ENCODE measurements at regions of chr11 and their contacts with region 1.

Region 1: DNA sequence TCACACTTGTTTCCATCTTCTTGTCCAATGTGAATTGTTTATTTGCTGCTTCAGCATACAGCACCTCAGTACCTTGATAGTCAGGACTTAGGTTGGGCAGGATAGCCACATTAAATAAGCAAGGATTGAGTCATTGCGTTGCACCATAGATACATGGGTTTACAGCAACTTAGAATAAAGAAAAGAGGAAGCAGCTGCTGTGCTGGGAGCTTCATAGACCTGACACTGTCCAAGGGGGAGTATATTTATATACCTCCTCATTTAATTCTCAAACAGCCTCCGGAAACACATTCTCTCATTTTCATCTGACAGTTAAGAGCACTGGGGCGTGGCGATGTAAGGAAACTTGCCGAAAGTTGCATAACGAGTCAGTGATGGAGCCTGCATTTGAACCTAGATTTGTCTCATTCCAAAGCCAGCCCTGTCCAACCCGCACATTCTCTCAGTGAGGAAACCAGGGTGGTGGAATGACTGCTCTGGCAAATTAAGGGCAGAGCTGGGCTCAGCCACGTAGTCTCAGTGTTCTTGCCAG is 42.2 kb downstream of the UBASH3B start:
- DNase-seq: peak; percentile 71
- ATAC-seq: peak; percentile 77
- H3K4me3 Mint-ChIP-seq: peak overlapping the region; percentile 46
- H3K27ac Mint-ChIP-seq: peak overlapping the region; percentile 82
- H3K4me1 Mint-ChIP-seq: peaks cover 87% of the 10 kb centered on the region
- H3K27me3 Mint-ChIP-seq: no peaks in the 10 kb centered on the region
- CTCF ChIP-seq: no peak

Region 2: GRCh38 chr11:122383186-122383585 is 314.5 kb before region 1 on chr11:
- CTCF ChIA-PET with region 1: no interaction called
- POLR2A ChIA-PET with region 1: no interaction called
- intact Hi-C with region 1: no loop called
- DNase-seq: no peak
- ATAC-seq: no peak
- H3K4me3 Mint-ChIP-seq: no peak overlapping the region
- H3K27ac Mint-ChIP-seq: no peak overlapping the region
- H3K4me1 Mint-ChIP-seq: no peaks in the 10 kb centered on the region
- H3K27me3 Mint-ChIP-seq: no peaks in the 10 kb centered on the region
- CTCF ChIP-seq: no peak

Region 3: GRCh38 chr11:122655527-122656072 is 42.1 kb before region 1 on chr11 and contains the start of gene UBASH3B:
- CTCF ChIA-PET with region 1: interaction called, 11 read pairs
- POLR2A ChIA-PET with region 1: interaction called, 10 read pairs
- intact Hi-C with region 1: no loop called
- DNase-seq: peak; percentile 76
- ATAC-seq: peak; percentile 75
- H3K4me3 Mint-ChIP-seq: peak within 1 kb of the TSS; percentile 97
- H3K27ac Mint-ChIP-seq: peak within 1 kb of the TSS; percentile 91
- H3K4me1 Mint-ChIP-seq: peaks cover 31% of the 10 kb centered on the region
- H3K27me3 Mint-ChIP-seq: no peaks in the 10 kb centered on the region
- CTCF ChIP-seq: peak; percentile 11
- total RNA-seq, gene UBASH3B: 36.1 to 40.6 TPM

Region 4: DNA sequence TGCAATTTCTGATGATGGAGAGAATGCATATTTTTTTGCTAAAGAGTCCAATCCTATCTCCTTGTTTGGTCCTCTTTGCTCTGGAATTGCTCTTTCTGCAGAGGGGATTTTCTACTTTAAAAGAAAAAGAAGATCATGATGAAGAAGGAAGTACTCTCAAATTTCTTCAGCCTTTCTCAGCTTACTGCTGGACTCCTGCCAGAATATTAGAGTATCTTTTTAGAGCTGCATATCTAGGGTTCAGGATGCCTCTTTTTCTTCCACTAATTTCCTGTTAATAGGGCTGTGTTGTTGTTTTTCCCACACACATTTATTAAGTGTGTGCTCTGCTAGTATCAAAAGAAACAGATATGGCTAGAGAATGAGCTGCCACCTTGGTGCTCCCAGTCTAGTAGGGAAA is 24.0 kb before region 1 on chr11:
- CTCF ChIA-PET with region 1: interaction called, 11 read pairs
- POLR2A ChIA-PET with region 1: interaction called, 8 read pairs
- intact Hi-C with region 1: no loop called
- DNase-seq: no peak
- ATAC-seq: no peak
- H3K4me3 Mint-ChIP-seq: no peak overlapping the region
- H3K27ac Mint-ChIP-seq: no peak overlapping the region
- H3K4me1 Mint-ChIP-seq: peaks cover 70% of the 10 kb centered on the region
- H3K27me3 Mint-ChIP-seq: no peaks in the 10 kb centered on the region
- CTCF ChIP-seq: no peak

Region 5: GRCh38 chr11:122717264-122717867 is 19.7 kb after region 1 on chr11:
- CTCF ChIA-PET with region 1: interaction called, 7 read pairs
- POLR2A ChIA-PET with region 1: interaction called, 11 read pairs
- intact Hi-C with region 1: loop called (anchors 2 kb)
- DNase-seq: peak; percentile 93
- ATAC-seq: peak; percentile 83
- H3K4me3 Mint-ChIP-seq: peak overlapping the region; percentile 45
- H3K27ac Mint-ChIP-seq: peak overlapping the region; percentile 90
- H3K4me1 Mint-ChIP-seq: peaks cover 87% of the 10 kb centered on the region
- H3K27me3 Mint-ChIP-seq: no peaks in the 10 kb centered on the region
- CTCF ChIP-seq: no peak

Region 6: GRCh38 chr11:122749005-122749687 is 51.4 kb after region 1 on chr11:
- CTCF ChIA-PET with region 1: interaction called, 32 read pairs
- POLR2A ChIA-PET with region 1: interaction called, 7 read pairs
- intact Hi-C with region 1: loop called (anchors 5 kb)
- DNase-seq: peak; percentile 83
- ATAC-seq: peak; percentile 73
- H3K4me3 Mint-ChIP-seq: no peak overlapping the region
- H3K27ac Mint-ChIP-seq: no peak overlapping the region
- H3K4me1 Mint-ChIP-seq: peaks cover 30% of the 10 kb centered on the region
- H3K27me3 Mint-ChIP-seq: no peaks in the 10 kb centered on the region
- CTCF ChIP-seq: no peak